OCI-LY7 (cell line): ENCODE measurements at regions of chr16 and their contacts with region 1.

Region 1: DNA sequence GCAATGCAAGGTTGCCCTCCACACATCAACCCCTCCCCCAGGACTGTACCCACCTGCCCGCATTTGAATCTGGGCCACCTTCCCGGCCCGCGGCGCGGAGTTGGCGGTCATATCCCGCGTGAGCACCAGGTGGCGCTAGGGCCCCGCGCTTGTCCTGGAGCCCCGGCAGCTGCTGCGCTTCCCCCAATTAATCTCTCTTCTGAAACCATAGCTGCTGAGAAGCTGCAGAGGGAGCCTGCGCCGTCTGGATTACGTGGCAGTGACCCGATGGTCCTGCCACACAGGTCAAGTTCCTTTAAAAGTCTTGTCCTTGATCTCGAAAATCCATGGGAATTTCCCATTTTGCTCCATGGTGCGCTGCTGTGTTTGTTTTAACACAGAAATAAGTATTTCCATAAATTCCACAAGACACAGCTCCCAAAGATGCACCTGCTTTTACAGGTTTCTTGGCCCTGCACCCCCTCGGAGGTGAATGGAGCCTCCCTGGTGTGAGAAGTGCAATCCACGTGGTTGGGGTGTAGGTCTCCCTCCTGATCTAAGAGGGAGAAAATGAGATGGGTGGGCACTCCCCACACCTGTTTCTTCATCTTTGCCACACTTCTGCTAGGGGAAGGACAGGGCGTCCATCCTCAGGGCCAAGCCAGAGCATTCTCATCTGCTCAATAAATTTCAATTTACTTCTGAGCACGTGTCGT is 22.1 kb downstream of the COX4I1 start:
- DNase-seq: peak; percentile 90
- H3K4me3 ChIP-seq: no peak overlapping the region
- H3K27ac ChIP-seq: no peak overlapping the region
- H3K4me1 ChIP-seq: peaks cover 12% of the 10 kb centered on the region
- CTCF ChIP-seq: peak; percentile 99

Region 2: GRCh38 chr16:85986931-85987749 is 165.6 kb after region 1 on chr16:
- CTCF ChIA-PET with region 1: interaction called, 30 read pairs
- POLR2A ChIA-PET with region 1: interaction called, 5 read pairs
- intact Hi-C with region 1: loop called (anchors 1 kb)
- DNase-seq: peak; percentile 71
- H3K4me3 ChIP-seq: no peak overlapping the region
- H3K27ac ChIP-seq: no peak overlapping the region
- H3K4me1 ChIP-seq: peaks cover 56% of the 10 kb centered on the region
- CTCF ChIP-seq: peak; percentile 59

Region 3: DNA sequence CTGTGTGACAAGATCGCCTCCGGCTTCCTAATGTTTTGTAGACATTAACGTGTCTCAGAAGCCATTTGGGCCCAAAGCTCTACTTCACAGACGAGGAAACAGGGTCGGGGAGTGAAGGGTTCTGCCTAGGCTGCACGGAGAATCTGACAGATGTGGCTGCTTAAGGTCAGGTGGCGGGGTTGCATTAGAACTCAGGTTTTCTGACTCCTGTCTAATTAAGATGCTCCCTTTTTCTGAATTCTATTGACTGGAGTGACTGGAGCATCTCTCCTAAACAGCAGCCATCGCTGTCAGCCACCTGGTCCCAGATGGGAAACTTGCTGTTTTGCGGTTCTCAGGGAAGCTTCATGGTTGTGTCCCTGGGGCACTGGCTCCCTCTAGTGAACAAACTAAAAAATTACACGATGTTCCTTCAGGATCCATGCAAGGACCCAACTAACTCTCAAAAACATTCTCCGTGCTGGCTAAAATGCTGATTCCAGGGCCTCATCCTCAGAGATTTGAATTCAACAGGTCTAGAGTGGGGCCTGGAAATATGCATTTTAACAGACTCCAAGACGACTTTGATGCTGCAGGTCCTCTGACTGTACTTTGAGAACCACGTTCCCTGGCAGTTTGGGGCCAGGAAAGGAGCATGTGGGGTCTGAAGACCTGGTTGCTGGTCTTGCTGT is 194.7 kb after region 1 on chr16:
- CTCF ChIA-PET with region 1: interaction called, 10 read pairs
- POLR2A ChIA-PET with region 1: interaction called, 3 read pairs
- intact Hi-C with region 1: loop called (anchors 1 kb)
- DNase-seq: peak; percentile 75
- H3K4me3 ChIP-seq: no peak overlapping the region
- H3K27ac ChIP-seq: no peak overlapping the region
- H3K4me1 ChIP-seq: peaks cover 4% of the 10 kb centered on the region
- CTCF ChIP-seq: peak; percentile 94

Region 4: GRCh38 chr16:86167061-86167460 is 345.5 kb after region 1 on chr16:
- CTCF ChIA-PET with region 1: no interaction called
- POLR2A ChIA-PET with region 1: no interaction called
- intact Hi-C with region 1: no loop called
- DNase-seq: no peak
- H3K4me3 ChIP-seq: no peak overlapping the region
- H3K27ac ChIP-seq: no peak overlapping the region
- H3K4me1 ChIP-seq: no peaks in the 10 kb centered on the region
- CTCF ChIP-seq: no peak